Sciatic nerve (tissue), 2 donors: ENCODE measurements at regions of chr12 and their contacts with region 1.

Region 1: DNA sequence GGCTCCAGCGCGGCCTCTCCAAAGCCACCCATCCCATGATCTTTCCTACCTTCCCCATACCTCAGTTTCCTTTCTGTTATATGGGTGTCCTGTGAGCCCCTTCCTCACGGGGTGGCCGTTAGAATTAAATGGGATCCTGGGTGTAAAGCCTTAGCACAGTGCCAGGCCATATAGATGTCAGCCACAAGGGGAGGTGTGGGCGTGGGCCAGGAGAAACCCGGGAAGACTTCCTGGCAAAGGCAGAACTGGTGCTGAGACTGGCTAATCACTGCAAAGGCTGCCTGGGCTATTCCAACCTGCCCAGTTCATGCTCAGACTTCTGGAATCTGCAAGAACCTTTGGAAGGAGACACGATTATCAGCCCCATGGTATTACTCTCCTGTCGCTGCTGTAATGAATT is 11.0 kb upstream of the NCOR2 start:
- DNase-seq: no peak
- ATAC-seq: no peak

Region 2: DNA sequence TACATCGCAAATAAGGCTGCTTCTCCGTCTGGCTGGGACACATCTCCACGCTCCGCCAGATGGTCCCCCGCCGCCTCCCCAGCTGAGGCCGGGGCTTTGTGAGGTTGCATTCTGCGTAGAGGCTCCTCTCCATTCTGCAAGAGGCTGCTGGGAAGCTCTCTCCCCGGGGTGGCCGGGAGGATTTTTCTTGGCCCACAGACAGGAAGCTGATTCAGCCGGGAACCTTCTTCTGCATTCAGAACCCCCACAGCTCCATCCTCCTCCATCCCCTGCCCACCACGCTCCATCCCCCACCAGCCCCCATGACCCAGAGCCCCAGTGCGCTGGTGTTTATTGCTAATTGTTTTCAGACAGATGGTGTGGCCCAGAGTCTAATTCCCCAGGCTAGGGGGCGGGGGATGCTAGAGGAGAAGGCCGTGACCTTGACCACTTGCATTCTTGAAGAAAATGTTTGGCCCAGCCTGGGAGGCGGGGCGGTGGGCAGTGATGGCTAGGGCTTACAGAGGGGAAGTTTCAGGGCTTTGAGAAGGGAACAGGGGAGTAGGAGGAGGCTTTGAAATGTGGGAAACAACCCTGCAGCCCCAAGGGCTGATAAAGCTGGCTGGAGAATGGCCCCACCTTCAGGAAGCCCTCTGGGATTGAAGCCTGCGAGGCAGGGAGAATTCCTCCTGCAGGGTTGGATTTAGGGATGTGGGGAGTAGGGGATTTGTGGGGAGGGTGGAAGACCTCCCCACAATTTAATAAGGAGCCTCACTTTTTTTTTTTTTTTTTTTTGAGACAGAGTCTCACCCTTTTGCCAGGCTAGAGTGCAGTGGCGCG is 77.5 kb after region 1 on chr12:
- intact Hi-C with region 1: loop called (anchors 10 kb)
- DNase-seq: peak; percentile 93
- ATAC-seq: peak; percentile 91